ENCODE measurements at regions of chr1 and their contacts with region 1.

Region 1: DNA sequence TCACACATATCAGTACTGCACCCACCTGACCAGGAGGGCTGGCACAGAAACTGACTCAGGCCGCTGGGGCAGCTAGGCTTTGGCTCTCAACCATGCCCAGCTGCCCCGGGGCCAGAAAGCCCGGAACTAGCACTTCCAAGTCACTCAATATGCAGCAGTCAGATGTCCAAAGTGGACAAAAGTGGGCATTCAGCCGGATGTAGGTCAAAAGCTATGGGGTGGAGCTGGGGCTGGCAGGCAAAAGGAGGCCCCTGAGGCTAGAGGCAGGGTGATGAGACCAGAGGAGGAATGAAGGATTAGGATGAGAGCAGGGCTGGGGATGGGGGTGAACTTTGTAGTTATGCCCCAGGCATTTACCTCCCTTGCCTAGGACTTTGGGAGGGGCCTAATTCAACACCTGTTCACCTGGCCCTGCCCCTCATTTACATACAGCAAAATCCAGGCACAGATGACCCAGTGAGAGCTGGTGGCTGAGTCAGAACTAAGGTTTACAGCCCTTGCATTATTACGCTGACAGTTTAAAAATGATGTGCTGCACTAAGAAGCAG is 30.7 kb upstream of the EDN2 start:
- DNase-seq: peak; percentile 96
- ATAC-seq: peak; percentile 66
- H3K4me3 ChIP-seq: peak overlapping the region; percentile 67; the same call in 1 of the 2 replicates
- H3K27ac ChIP-seq: peak overlapping the region; percentile 96
- H3K4me1 ChIP-seq: peaks cover 33% of the 10 kb centered on the region
- H3K27me3 ChIP-seq: no peaks in the 10 kb centered on the region
- CTCF ChIP-seq: no peak

Region 2: DNA sequence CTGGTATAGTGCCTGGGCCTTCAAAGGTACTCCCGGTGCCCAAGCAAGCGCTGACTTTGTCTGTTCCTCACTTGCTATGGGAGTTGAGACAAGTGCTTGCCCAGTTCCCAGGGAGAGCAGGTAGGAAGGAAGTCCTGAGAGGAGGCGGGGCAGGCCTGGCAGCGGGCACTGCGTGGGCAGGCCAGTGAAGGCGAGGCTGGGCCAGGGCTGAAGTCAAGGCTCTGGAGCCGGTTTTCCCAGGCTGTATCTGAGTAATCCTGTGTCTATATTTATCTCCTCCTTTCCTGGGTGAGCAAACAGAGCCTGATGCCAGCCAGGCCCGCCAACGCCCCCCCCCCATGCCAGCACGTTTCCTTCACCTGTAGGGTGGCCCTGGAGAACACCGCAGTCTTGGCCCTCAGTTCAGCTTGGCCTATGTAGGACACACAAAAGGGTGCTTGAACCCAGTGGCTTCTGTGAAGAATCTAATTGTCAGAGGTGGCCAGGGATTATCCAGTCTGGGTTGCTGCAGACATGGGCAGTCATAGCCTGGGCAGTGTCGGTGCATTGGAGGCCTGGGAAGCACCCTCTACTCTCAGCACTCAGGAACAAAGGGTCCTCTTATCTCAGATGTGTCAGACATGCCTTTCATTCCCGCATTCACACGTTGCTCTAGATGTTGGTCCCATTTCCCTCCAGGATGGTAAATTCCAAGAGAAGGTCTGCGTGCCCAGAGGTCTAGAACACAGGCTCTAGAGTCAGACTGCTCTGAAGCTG is 14.6 kb before region 1 on chr1:
- CTCF ChIA-PET with region 1: no interaction called
- POLR2A ChIA-PET with region 1: no interaction called
- intact Hi-C with region 1: loop called (anchors 2 kb)
- DNase-seq: peak; percentile 94
- ATAC-seq: peak; percentile 58
- H3K4me3 ChIP-seq: no peak overlapping the region
- H3K27ac ChIP-seq: peak overlapping the region; percentile 73
- H3K4me1 ChIP-seq: peaks cover 59% of the 10 kb centered on the region
- H3K27me3 ChIP-seq: no peaks in the 10 kb centered on the region
- CTCF ChIP-seq: no peak